ENCODE measurements at regions of chr11 and their contacts with region 1.

Region 1: GRCh38 chr11:116927163-116927974 is 89.9 kb upstream of the APOA1 start:
- DNase-seq: peak; percentile 68
- H3K4me3 Mint-ChIP-seq: peak overlapping the region; percentile 38
- H3K27ac Mint-ChIP-seq: peak overlapping the region; percentile 74
- H3K4me1 Mint-ChIP-seq: peaks cover 76% of the 10 kb centered on the region
- H3K27me3 Mint-ChIP-seq: no peaks in the 10 kb centered on the region

Region 2: GRCh38 chr11:116772443-116773202 is 154.7 kb before region 1 on chr11 and contains the start of gene BUD13:
- CTCF ChIA-PET with region 1: no interaction called
- POLR2A ChIA-PET with region 1: no interaction called
- intact Hi-C with region 1: loop called (anchors 5 kb)
- DNase-seq: peak; percentile 96
- H3K4me3 Mint-ChIP-seq: peak within 1 kb of the TSS; percentile 99
- H3K27ac Mint-ChIP-seq: peak within 1 kb of the TSS; percentile 95
- H3K4me1 Mint-ChIP-seq: peaks cover 55% of the 10 kb centered on the region
- H3K27me3 Mint-ChIP-seq: no peaks in the 10 kb centered on the region
- total RNA-seq, gene BUD13: 30.3 to 32.7 TPM

Region 3: DNA sequence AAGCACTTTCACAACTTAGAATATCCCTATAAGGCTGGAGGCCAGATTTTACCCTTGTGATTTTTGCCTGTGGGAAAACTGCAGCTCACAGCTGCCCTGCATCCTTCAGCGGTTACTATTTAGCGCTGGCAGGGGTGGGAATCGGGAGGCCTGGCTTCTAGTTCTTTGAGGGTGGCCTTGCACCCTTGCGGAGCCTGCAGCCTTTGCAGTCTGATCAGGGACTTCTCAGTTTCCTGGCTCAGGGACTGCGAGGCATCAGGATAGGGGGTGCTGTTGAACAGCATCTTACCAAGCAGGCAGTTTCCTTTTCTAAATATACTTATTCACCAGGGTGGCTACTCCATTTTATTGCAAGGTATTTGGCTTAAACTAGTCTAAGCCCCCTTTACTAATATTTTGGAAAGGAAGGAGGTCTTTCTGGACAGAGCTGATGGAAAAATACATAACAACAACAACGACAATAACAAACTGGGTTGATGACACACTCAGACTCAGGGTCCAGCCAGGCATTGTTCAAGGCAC is 87.1 kb before region 1 on chr11:
- CTCF ChIA-PET with region 1: no interaction called
- POLR2A ChIA-PET with region 1: no interaction called
- intact Hi-C with region 1: no loop called
- DNase-seq: peak; percentile 26
- H3K4me3 Mint-ChIP-seq: no peak overlapping the region
- H3K27ac Mint-ChIP-seq: no peak overlapping the region
- H3K4me1 Mint-ChIP-seq: peaks cover 8% of the 10 kb centered on the region
- H3K27me3 Mint-ChIP-seq: no peaks in the 10 kb centered on the region

Region 4: DNA sequence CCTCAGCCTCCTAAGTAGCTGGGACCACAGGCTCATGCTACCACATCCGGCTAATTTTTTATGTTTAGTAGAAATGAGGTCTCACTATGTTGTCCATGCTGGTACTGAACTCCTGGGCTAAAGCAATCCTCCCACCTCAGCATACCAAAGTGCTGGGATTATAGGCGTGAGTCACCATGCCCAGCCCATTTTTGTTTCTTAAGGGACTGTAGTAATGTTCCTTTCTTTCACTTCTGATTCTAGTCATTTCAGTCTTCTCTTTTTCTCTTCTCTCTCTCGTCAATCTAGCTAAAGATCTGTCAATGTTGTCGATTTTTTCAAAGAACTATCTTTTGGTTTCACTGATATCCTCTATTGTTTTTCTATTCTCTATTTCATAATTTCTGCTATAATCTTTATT is 21.0 kb after region 1 on chr11:
- CTCF ChIA-PET with region 1: no interaction called
- POLR2A ChIA-PET with region 1: interaction called, 3 read pairs
- intact Hi-C with region 1: loop called (anchors 1 kb)
- DNase-seq: peak; percentile 68
- H3K4me3 Mint-ChIP-seq: no peak overlapping the region
- H3K27ac Mint-ChIP-seq: no peak overlapping the region
- H3K4me1 Mint-ChIP-seq: peaks cover 41% of the 10 kb centered on the region
- H3K27me3 Mint-ChIP-seq: no peaks in the 10 kb centered on the region

Region 5: DNA sequence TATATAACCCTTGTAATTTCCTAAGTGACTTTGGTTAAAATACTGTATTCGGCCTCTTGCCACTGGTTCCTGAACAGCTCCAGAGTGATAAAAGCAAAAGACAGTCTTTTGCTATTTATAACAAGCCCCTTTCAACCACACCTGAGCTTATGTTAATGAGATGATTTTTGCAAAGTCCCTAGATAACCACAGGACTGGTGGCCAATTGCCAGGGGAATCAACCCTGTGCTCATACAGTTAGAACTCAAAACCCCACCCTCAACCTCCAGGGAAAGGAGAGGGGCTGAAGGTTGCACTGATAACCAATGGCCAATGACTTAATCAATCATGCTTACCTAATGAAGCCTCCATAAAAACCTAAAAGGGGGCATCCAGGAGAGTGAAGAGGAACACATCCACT is 92.9 kb after region 1 on chr11:
- CTCF ChIA-PET with region 1: interaction called, 4 read pairs
- POLR2A ChIA-PET with region 1: no interaction called
- intact Hi-C with region 1: loop called (anchors 1 kb)
- DNase-seq: peak; percentile 65
- H3K4me3 Mint-ChIP-seq: no peak overlapping the region
- H3K27ac Mint-ChIP-seq: peak overlapping the region; percentile 11
- H3K4me1 Mint-ChIP-seq: peaks cover 67% of the 10 kb centered on the region
- H3K27me3 Mint-ChIP-seq: no peaks in the 10 kb centered on the region

Region 6: DNA sequence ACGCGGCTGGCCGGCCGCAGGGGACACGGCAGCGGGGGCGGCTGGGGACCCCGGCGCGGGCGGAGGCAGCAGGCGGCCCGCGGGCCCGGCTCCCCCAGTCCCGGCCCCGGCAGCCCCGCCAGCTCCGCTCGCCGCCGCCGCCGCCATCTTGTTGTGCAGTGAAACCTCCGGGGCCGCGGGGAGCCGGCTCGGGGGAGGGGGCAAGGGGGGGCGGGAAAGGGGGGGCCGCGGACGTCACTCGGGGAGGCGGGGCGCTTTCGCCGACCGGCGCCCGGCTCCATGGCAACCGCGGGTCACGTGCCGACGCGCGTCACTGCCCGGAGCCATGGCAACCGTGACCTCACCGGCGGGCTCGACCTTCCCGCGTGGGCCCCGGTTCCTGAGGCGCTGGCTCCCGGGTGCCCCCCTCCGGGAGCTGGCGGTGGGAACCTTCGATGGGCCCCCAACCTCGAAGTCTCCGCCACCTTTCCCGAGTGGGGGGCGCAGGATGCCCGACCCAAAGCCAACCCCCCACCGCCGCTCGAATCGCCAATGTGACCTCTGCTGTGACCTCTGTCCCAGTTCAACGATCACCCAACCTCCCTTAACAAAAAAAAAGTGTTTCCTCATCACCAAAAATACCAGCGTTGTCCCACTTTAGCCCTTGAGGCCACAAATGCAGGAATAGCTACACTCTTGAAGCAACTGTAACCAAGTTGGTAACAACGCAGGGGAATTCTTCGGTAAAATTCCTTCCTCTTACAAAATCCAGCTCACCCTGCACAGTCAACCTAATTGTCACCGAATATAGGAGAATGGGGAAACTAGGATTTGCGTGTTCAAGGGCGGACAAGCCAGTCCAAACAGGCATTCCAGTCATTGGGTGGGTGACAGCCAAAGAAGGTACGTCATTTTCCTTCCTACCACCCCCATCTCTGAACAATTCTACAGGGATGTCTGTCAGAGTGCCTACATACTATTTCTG is 171.2 kb after region 1 on chr11 and contains the start of gene SIK3:
- CTCF ChIA-PET with region 1: interaction called, 10 read pairs
- POLR2A ChIA-PET with region 1: interaction called, 8 read pairs
- intact Hi-C with region 1: loop called (anchors 1 kb)
- DNase-seq: peak; percentile 94
- H3K4me3 Mint-ChIP-seq: peak within 1 kb of the TSS; percentile 88
- H3K27ac Mint-ChIP-seq: peak within 1 kb of the TSS; percentile 91
- H3K4me1 Mint-ChIP-seq: peaks cover 43% of the 10 kb centered on the region
- H3K27me3 Mint-ChIP-seq: no peaks in the 10 kb centered on the region
- total RNA-seq, gene SIK3: 26.1 to 26.2 TPM

Region 7: GRCh38 chr11:117232092-117232878 is 304.9 kb after region 1 on chr11 and contains the start of gene RNF214:
- CTCF ChIA-PET with region 1: no interaction called
- POLR2A ChIA-PET with region 1: no interaction called
- intact Hi-C with region 1: loop called (anchors 5 kb)
- DNase-seq: peak; percentile 83
- H3K4me3 Mint-ChIP-seq: peak within 1 kb of the TSS; percentile 99
- H3K27ac Mint-ChIP-seq: peak within 1 kb of the TSS; percentile 98
- H3K4me1 Mint-ChIP-seq: peaks cover 37% of the 10 kb centered on the region
- H3K27me3 Mint-ChIP-seq: no peaks in the 10 kb centered on the region
- total RNA-seq, gene RNF214: 16.9 to 18.3 TPM

Measured in activated CD4-positive, alpha-beta memory T cell treated with anti-CD3 and anti-CD28 coated beads for 36 hours (primary cell).